GM12878 (cell line): ENCODE measurements at regions of chr16 and their contacts with region 1.

Region 1: DNA sequence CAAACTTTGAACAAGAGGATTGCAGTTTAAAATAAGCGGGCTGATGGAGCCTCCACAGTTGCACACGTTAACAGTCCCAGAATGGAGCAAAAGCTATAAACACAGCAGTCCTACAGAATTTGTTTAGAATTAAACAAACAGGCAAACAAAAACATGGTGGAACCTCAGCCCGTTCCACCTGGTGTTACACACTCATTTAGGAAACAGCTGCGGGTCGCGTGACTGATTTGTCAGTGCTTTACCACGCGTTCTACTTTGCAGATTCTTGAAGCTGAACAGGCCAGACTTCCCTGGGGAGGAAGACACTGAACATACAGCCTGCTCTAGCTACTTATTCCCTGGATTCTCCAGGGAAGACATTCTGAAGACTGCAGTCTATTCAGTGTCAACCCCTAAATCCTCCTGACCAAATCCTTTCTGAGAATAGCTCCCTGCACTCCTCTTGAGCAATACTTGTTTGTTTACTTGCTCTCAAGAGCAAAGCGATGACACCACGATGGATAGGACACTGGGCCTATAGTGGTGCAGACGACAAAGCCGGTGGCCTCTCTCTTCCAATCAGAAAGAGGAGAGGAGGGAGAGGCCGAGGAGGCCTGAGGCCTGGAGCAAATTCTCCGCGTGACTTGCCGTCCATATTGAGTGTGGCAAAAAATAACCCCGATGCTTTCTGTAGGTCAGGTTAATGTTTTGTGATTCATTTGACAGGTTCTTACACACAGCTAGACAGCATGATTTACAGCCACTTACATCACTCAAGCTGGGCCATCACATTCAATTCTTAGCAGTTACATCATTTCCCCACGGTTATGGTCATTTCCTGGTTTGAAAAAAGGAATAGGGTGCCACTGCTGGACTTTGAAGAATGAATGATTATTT is 4.0 kb upstream of the MAP1LC3B start:
- DNase-seq: peak; percentile 97
- ATAC-seq: peak; percentile 80
- H3K4me3 ChIP-seq: 0 out of 2 replicates have a peak overlapping the region, but pooled peaks have one; percentile 9
- H3K27ac ChIP-seq: peak overlapping the region; percentile 79
- H3K4me1 ChIP-seq: peaks cover 13% of the 10 kb centered on the region
- H3K27me3 ChIP-seq: no peaks in the 10 kb centered on the region
- CTCF ChIP-seq: no peak
- EP300 ChIP-seq: peak; percentile 31 to 72; a peak in 3 of 4 replicates
- POLR2A ChIP-seq: peak; percentile 29; the same call in 1 of the 2 replicates
- RAD21 ChIP-seq: no peak

Region 2: GRCh38 chr16:86554917-86555703 is 833.1 kb before region 1 on chr16 and contains the start of gene MTHFSD:
- CTCF ChIA-PET with region 1: no interaction called
- POLR2A ChIA-PET with region 1: no interaction called
- RAD21 ChIA-PET with region 1: no interaction called
- SMC1A ChIA-PET with region 1: no interaction called
- in situ Hi-C with region 1: loop called (anchors 10 kb)
- intact Hi-C with region 1: no loop called
- DNase-seq: peak; percentile 74
- ATAC-seq: peak; percentile 98
- H3K4me3 ChIP-seq: peak within 1 kb of the TSS; percentile 92
- H3K27ac ChIP-seq: peak within 1 kb of the TSS; percentile 81
- H3K4me1 ChIP-seq: no peaks in the 10 kb centered on the region; the same call in 1 of the 2 replicates
- H3K27me3 ChIP-seq: no peaks in the 10 kb centered on the region
- CTCF ChIP-seq: no peak
- EP300 ChIP-seq: no peak
- POLR2A ChIP-seq: peak; percentile 91
- RAD21 ChIP-seq: no peak
- polyA plus RNA-seq, gene MTHFSD: 2.2 to 3.3 TPM

Region 3: GRCh38 chr16:87424260-87424659 is 36.1 kb after region 1 on chr16:
- CTCF ChIA-PET with region 1: no interaction called
- POLR2A ChIA-PET with region 1: no interaction called
- RAD21 ChIA-PET with region 1: no interaction called
- SMC1A ChIA-PET with region 1: no interaction called
- in situ Hi-C with region 1: no loop called
- intact Hi-C with region 1: no loop called
- DNase-seq: no peak
- ATAC-seq: no peak
- H3K4me3 ChIP-seq: no peak overlapping the region
- H3K27ac ChIP-seq: no peak overlapping the region
- H3K4me1 ChIP-seq: no peaks in the 10 kb centered on the region
- H3K27me3 ChIP-seq: no peaks in the 10 kb centered on the region; a peak in 1 of 4 replicates
- CTCF ChIP-seq: no peak
- EP300 ChIP-seq: no peak
- POLR2A ChIP-seq: no peak
- RAD21 ChIP-seq: no peak

Region 4: GRCh38 chr16:87636072-87636684 is 248.0 kb after region 1 on chr16:
- CTCF ChIA-PET with region 1: interaction called, 3 read pairs
- POLR2A ChIA-PET with region 1: no interaction called
- RAD21 ChIA-PET with region 1: no interaction called
- SMC1A ChIA-PET with region 1: no interaction called
- in situ Hi-C with region 1: no loop called
- intact Hi-C with region 1: loop called (anchors 1 kb)
- DNase-seq: no peak
- ATAC-seq: peak; percentile 85
- H3K4me3 ChIP-seq: no peak overlapping the region
- H3K27ac ChIP-seq: no peak overlapping the region
- H3K4me1 ChIP-seq: no peaks in the 10 kb centered on the region
- H3K27me3 ChIP-seq: no peaks in the 10 kb centered on the region; a peak in 1 of 4 replicates
- CTCF ChIP-seq: peak; percentile 51 to 61 (median 59); a peak in 5 of 6 replicates
- EP300 ChIP-seq: no peak
- POLR2A ChIP-seq: no peak
- RAD21 ChIP-seq: peak; percentile 64

Region 5: GRCh38 chr16:87860553-87861299 is 472.5 kb after region 1 on chr16:
- CTCF ChIA-PET with region 1: no interaction called
- POLR2A ChIA-PET with region 1: no interaction called
- RAD21 ChIA-PET with region 1: no interaction called
- SMC1A ChIA-PET with region 1: no interaction called
- in situ Hi-C with region 1: loop called (anchors 10 kb)
- intact Hi-C with region 1: no loop called
- DNase-seq: no peak
- ATAC-seq: peak; percentile 60
- H3K4me3 ChIP-seq: 0 out of 2 replicates have a peak overlapping the region, but pooled peaks have one; percentile 39
- H3K27ac ChIP-seq: peak overlapping the region; percentile 25
- H3K4me1 ChIP-seq: peaks cover 47% of the 10 kb centered on the region
- H3K27me3 ChIP-seq: no peaks in the 10 kb centered on the region
- CTCF ChIP-seq: no peak
- EP300 ChIP-seq: no peak
- POLR2A ChIP-seq: no peak
- RAD21 ChIP-seq: no peak

Region 6: GRCh38 chr16:88452482-88453216 is 1064.5 kb after region 1 on chr16:
- CTCF ChIA-PET with region 1: no interaction called
- POLR2A ChIA-PET with region 1: no interaction called
- RAD21 ChIA-PET with region 1: no interaction called
- SMC1A ChIA-PET with region 1: no interaction called
- in situ Hi-C with region 1: no loop called
- intact Hi-C with region 1: loop called (anchors 10 kb)
- DNase-seq: peak; percentile 67
- ATAC-seq: peak; percentile 72
- H3K4me3 ChIP-seq: peak overlapping the region; percentile 64
- H3K27ac ChIP-seq: peak overlapping the region; percentile 79
- H3K4me1 ChIP-seq: peaks cover 29% of the 10 kb centered on the region
- H3K27me3 ChIP-seq: peaks cover 0 to 2% of the 10 kb centered on the region in 2 experiments; a peak in 1 of 4 replicates
- CTCF ChIP-seq: no peak
- EP300 ChIP-seq: no peak
- POLR2A ChIP-seq: 0 out of 2 replicates have a peak, but pooled peaks have one; percentile 9
- RAD21 ChIP-seq: no peak